ENCODE measurements at regions of chr2 and their contacts with region 1.

Region 1: DNA sequence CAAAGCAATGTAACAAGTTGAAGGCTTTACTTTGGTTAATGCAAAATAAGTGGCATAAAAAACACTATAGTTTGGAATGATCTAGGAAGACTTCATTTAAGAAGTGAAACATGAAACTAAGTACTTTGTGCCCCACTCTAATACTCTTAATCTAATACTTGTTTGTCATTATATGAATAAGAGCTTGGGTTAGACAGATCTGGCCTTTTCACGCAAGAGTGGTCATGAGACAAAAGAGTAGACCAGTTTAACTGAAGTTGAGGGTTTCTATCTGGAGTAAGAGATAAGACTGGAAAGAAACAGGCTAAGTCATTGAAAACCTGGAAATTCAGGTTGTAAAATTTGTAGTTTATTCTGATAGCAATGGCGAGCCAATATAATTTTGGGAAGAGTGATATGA is 2.8 kb downstream of the SLC30A6 start:
- DNase-seq: no peak
- H3K4me3 ChIP-seq: no peak overlapping the region
- H3K27ac ChIP-seq: no peak overlapping the region
- H3K4me1 ChIP-seq: peaks cover 0 to 26% (median 7%) of the 10 kb centered on the region in 4 donors
- H3K27me3 ChIP-seq: no peaks in the 10 kb centered on the region
- CTCF ChIP-seq: no peak
- EP300 ChIP-seq: no peak
- POLR2A ChIP-seq: no peak

Region 2: GRCh38 chr2:30580391-30580790 is 1588.1 kb before region 1 on chr2:
- in situ Hi-C with region 1: no loop called
- intact Hi-C with region 1: no loop called
- DNase-seq: no peak
- H3K4me3 ChIP-seq: no peak overlapping the region
- H3K27ac ChIP-seq: no peak overlapping the region
- H3K4me1 ChIP-seq: no peaks in the 10 kb centered on the region
- H3K27me3 ChIP-seq: no peaks in the 10 kb centered on the region
- CTCF ChIP-seq: no peak
- EP300 ChIP-seq: no peak
- POLR2A ChIP-seq: no peak

Region 3: GRCh38 chr2:32277674-32278482 is 109.4 kb after region 1 on chr2 and contains the start of gene YIPF4:
- in situ Hi-C with region 1: loop called in 1 of 4 experiments (anchors 10 kb)
- intact Hi-C with region 1: no loop called
- DNase-seq: peak; percentile 90
- H3K4me3 ChIP-seq: peak within 1 kb of the TSS; percentile 84 to 99 (median 98)
- H3K27ac ChIP-seq: peak within 1 kb of the TSS; percentile 83 to 93 (median 90)
- H3K4me1 ChIP-seq: peaks cover 0 to 36% (median 11%) of the 10 kb centered on the region in 4 donors
- H3K27me3 ChIP-seq: no peaks in the 10 kb centered on the region
- CTCF ChIP-seq: no peak
- EP300 ChIP-seq: no peak
- POLR2A ChIP-seq: peak; percentile 46
- total RNA-seq, gene YIPF4: 11.7 to 19.5 (median 16.1) TPM

Region 4: DNA sequence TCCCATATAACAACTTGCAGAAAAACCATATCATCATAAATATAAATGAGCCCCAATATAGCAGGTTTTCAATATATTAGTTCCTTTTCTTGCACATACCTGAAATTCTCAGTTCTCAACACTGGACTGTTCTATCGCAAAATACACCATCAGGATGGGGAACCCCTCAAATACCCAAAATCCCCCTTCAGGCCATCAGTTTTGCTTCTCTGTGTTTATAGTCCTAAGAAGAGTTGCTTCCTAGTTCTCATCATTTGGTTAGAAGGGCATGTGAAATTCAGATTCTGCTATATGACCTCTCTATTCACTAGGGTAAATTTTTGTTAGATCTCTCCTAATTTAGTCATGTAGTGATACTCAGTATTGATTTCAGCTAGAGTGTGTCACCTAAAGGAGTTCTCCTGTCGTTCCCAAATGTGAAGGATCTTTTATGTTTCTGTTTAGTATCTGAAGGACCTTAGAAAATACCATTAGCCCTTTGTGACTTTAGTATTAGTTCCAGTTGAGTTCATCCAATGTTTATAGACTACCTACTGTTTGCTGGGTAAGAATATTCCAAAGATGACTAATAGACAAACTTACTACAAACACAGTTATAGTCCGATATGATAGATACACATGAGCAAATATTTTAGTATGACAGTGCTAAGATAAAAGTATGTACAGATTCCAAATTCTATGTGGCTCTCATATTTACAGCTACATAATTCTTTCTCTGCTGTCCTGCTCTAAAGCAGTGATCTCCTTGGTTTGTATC is 575.1 kb after region 1 on chr2:
- in situ Hi-C with region 1: no loop called
- intact Hi-C with region 1: no loop called
- DNase-seq: no peak
- H3K4me3 ChIP-seq: no peak overlapping the region
- H3K27ac ChIP-seq: no peak overlapping the region
- H3K4me1 ChIP-seq: no peaks in the 10 kb centered on the region
- H3K27me3 ChIP-seq: no peaks in the 10 kb centered on the region
- CTCF ChIP-seq: no peak
- EP300 ChIP-seq: no peak
- POLR2A ChIP-seq: no peak